Prostate gland (tissue), 2 donors: ENCODE measurements at regions of chr14 and their contacts with region 1.

Region 1: DNA sequence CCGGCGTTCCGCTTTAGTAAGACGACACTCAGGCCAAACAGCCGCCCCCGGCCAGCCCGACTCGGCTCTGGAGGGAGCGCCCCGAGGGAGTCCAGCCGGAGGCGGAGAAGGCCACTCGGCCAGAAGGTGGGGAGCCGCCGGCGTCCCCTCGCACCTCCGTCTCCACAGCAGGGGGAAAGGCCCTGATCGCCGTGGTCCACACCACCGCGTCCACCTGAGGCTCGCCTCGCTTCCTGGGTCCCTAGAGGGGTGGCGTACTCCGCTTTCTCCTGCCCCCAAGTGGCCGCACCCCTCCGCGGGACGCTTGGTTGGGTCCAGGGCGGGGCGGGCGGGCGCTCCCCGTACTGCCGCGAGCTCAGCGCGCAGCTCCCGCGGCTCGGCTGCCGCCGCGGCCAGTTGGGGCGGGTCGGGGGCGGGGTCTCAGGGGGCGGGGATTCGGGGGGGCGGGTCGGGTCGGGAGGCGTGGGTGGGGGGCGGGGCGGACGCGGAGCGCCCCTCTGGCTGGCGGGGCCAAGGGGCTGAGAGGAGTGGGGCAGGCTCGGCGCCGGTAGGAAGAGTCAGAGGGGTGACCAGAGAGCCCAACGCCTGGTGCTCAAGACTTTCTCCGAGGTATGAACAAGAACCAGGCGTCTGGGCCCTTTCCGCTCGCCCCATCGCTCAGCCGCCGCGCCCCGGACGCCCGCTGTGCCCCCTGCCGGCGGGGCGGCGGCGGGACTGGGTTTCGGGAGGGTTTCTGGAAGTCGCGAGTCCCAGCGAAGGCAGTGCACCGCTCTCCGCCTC is at the start of gene FRMD6:
- DNase-seq: peak; percentile 83
- H3K4me3 ChIP-seq: peak within 1 kb of the TSS; percentile 76 to 83
- H3K27ac ChIP-seq: peak within 1 kb of the TSS; percentile 96 to 97
- H3K4me1 ChIP-seq: no peaks in the 10 kb centered on the region
- H3K27me3 ChIP-seq: no peaks in the 10 kb centered on the region
- CTCF ChIP-seq: peak; percentile 71 to 83 (median 77)
- POLR2A ChIP-seq: peak; percentile 76
- total RNA-seq, gene FRMD6: 59.1 to 84.0 TPM

Region 2: GRCh38 chr14:51697848-51698247 is 46.3 kb after region 1 on chr14:
- intact Hi-C with region 1: loop called (anchors 5 kb)
- DNase-seq: no peak
- H3K4me3 ChIP-seq: no peak overlapping the region
- H3K27ac ChIP-seq: peak overlapping the region in 1 of 2 donors; percentile 15
- H3K4me1 ChIP-seq: no peaks in the 10 kb centered on the region
- H3K27me3 ChIP-seq: no peaks in the 10 kb centered on the region
- CTCF ChIP-seq: no peak
- POLR2A ChIP-seq: no peak

Region 3: DNA sequence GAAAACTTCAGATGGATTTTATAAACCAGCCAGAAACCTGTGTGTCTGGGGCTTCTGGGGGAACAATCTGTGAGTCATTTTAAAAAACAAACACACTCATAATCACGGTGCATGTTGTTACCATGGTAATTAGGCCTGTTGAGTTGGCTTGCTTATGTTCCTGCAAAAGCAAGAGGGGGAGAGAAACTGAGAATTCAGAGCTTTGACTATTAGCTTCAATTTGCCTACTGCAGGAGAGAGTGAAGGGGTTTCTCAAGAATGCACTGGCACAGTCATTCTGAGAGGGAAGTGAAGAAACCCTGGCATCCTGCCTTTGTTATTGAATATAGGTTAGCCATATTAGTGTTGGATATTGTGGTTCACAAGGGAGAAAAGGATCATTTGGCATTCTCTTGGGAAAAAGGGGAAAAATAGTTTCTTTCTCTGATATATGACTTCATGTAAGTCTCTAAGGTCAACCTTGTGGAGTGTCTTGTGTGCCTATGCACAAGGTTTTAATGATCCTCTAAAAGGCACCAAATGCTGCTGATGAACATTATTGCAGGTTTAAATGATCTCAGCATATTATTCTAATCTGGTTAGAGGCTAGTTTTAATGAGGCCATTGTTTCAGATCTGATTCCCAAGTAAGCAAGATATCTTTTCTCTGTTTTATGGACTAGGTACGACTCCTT is 221.8 kb after region 1 on chr14:
- intact Hi-C with region 1: no loop called
- DNase-seq: no peak
- H3K4me3 ChIP-seq: no peak overlapping the region
- H3K27ac ChIP-seq: no peak overlapping the region
- H3K4me1 ChIP-seq: no peaks in the 10 kb centered on the region
- H3K27me3 ChIP-seq: no peaks in the 10 kb centered on the region
- CTCF ChIP-seq: no peak
- POLR2A ChIP-seq: no peak

Region 4: GRCh38 chr14:51908086-51908485 is 256.5 kb after region 1 on chr14:
- intact Hi-C with region 1: no loop called
- DNase-seq: no peak
- H3K4me3 ChIP-seq: no peak overlapping the region
- H3K27ac ChIP-seq: no peak overlapping the region
- H3K4me1 ChIP-seq: no peaks in the 10 kb centered on the region
- H3K27me3 ChIP-seq: no peaks in the 10 kb centered on the region
- CTCF ChIP-seq: no peak
- POLR2A ChIP-seq: no peak